AG04450 (cell line): ENCODE measurements at regions of chr9 and their contacts with region 1.

Region 1: DNA sequence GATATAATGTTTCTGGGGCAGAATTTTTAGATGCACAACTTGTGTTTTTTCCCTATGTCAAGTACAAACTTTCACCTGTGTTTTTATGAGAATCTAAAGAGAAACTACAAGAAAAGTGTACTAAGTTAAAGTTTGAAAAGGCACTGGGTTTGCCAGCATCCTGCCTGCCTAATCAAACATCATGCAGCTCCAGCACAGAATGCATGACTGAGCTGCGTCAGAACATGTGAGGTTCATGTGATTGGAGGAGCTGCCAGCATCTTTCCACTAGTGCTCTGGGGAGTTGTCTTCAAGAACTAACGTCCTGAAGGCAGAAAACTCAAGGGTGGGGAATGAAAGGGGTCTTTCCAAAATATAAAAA is 46.1 kb upstream of the RIC1 start:
- DNase-seq: peak; percentile 56
- H3K4me3 ChIP-seq: no peak overlapping the region
- H3K27ac ChIP-seq: peak overlapping the region; percentile 93
- H3K27me3 ChIP-seq: no peaks in the 10 kb centered on the region
- CTCF ChIP-seq: no peak

Region 2: GRCh38 chr9:5186416-5187169 is 396.2 kb before region 1 on chr9:
- CTCF ChIA-PET with region 1: interaction called, 90 read pairs
- POLR2A ChIA-PET with region 1: no interaction called
- DNase-seq: peak; percentile 41
- H3K4me3 ChIP-seq: no peak overlapping the region
- H3K27ac ChIP-seq: no peak overlapping the region
- H3K27me3 ChIP-seq: no peaks in the 10 kb centered on the region
- CTCF ChIP-seq: peak; percentile 83

Region 3: DNA sequence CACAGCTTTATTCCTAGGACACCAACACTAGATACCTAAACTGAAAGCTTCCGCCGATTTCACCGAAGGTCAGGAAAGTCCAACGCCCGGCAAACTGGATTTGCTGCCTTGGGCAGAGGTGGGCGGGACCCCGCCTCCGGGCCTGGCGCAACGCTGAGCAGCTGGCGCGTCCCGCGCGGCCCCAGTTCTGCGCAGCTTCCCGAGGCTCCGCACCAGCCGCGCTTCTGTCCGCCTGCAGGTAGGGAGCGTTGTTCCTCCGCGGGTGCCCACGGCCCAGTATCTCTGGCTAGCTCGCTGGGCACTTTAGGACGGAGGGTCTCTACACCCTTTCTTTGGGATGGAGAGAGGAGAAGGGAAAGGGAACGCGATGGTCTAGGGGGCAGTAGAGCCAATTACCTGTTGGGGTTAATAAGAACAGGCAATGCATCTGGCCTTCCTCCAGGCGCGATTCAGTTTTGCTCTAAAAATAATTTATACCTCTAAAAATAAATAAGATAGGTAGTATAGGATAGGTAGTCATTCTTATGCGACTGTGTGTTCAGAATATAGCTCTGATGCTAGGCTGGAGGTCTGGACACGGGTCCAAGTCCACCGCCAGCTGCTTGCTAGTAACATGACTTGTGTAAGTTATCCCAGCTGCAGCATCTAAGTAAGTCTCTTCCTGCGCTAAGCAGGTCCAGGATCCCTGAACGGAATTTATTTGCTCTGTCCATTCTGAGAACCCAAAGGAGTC is 132.3 kb before region 1 on chr9 and contains the start of gene CD274:
- CTCF ChIA-PET with region 1: interaction called, 30 read pairs
- POLR2A ChIA-PET with region 1: interaction called, 7 read pairs
- DNase-seq: peak; percentile 74
- H3K4me3 ChIP-seq: peak within 1 kb of the TSS; percentile 78
- H3K27ac ChIP-seq: peak within 1 kb of the TSS; percentile 66
- H3K27me3 ChIP-seq: no peaks in the 10 kb centered on the region
- CTCF ChIP-seq: peak; percentile 73
- polyA plus RNA-seq, gene CD274: 16.3 and 16.6 TPM in 2 replicates

Region 4: DNA sequence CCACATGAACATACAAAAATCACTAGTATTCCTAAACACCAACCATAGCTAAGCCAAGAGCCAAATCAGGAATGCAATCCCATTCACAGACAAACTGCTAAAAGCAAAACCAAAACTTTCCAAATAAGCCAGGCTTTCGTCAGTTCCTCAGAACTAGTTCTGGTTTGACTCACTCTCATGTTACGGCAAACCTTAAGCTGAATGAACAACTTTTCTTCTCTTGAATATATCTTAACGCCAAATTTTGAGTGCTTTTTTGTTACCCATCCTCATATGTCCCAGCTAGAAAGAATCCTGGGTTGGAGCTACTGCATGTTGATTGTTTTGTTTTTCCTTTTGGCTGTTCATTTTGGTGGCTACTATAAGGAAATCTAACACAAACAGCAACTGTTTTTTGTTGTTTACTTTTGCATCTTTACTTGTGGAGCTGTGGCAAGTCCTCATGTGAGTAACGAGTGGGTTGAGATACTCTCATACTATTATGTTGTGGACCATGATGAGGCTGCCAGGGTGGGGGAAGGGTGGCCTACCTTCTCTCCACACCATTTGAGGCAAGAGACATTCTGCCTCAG is 72.4 kb before region 1 on chr9 and contains the start of gene PDCD1LG2:
- CTCF ChIA-PET with region 1: interaction called, 3 read pairs
- POLR2A ChIA-PET with region 1: interaction called, 24 read pairs
- DNase-seq: peak; percentile 59
- H3K4me3 ChIP-seq: peak within 1 kb of the TSS; percentile 58
- H3K27ac ChIP-seq: peak within 1 kb of the TSS; percentile 94
- H3K27me3 ChIP-seq: no peaks in the 10 kb centered on the region
- CTCF ChIP-seq: no peak
- polyA plus RNA-seq, gene PDCD1LG2: 31.5 TPM in 2 replicates

Region 5: DNA sequence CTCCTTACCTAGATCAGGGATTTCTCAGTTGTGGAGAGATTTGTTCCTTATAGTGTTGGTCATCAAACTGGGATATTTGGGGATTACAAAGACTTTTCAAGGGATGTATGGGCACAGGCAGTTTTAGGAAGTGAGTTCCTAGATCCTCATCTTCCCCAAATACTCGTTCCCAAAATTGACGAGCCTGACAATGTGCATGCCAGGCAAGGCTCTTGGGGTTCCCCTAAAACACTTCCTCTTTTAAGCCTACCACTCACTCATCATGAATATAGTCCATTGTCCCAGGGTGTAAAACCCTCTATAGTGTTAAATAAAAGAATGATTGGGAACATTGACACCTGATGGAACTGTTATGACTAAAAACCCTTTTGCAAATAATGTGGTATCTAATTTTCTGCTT is 46.1 kb before region 1 on chr9:
- CTCF ChIA-PET with region 1: no interaction called
- POLR2A ChIA-PET with region 1: no interaction called
- DNase-seq: no peak
- H3K4me3 ChIP-seq: no peak overlapping the region
- H3K27ac ChIP-seq: no peak overlapping the region
- H3K27me3 ChIP-seq: no peaks in the 10 kb centered on the region
- CTCF ChIP-seq: no peak

Region 6: DNA sequence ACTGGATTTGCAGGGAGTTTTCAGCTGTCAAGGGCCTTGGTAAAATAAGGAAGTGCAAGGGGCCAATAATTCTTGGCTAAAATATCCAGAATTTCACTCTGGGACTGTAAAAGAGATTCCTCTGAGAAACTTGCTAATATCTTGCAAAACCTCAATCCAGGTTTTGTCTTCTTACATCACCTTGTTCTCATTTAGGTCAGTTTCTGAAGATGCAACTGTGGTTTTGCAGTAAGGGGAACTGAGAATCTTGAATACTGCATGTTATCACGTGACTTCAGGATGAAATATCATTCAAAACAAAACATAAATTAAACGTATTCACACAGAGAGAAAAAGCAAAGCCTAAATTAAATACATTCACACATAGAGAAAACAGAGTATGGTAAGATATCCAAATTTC is 11.1 kb after region 1 on chr9:
- CTCF ChIA-PET with region 1: interaction called, 66 read pairs
- POLR2A ChIA-PET with region 1: no interaction called
- DNase-seq: no peak
- H3K4me3 ChIP-seq: no peak overlapping the region
- H3K27ac ChIP-seq: no peak overlapping the region
- H3K27me3 ChIP-seq: no peaks in the 10 kb centered on the region
- CTCF ChIP-seq: no peak

Region 7: GRCh38 chr9:5628530-5629311 is 45.9 kb after region 1 on chr9 and contains the start of gene RIC1:
- CTCF ChIA-PET with region 1: no interaction called
- POLR2A ChIA-PET with region 1: interaction called, 10 read pairs
- DNase-seq: peak; percentile 69
- H3K4me3 ChIP-seq: peak within 1 kb of the TSS; percentile 85
- H3K27ac ChIP-seq: peak within 1 kb of the TSS; percentile 90
- H3K27me3 ChIP-seq: no peaks in the 10 kb centered on the region
- CTCF ChIP-seq: no peak
- polyA plus RNA-seq, gene RIC1: 60.6 and 65.4 TPM in 2 replicates